Cardiac septum (tissue), 1 donor: ENCODE measurements at regions of chr6 and their contacts with region 1.

Region 1: GRCh38 chr6:151390276-151391032 is 905 bp downstream of the ZBTB2 start:
- DNase-seq: peak; percentile 98

Region 2: DNA sequence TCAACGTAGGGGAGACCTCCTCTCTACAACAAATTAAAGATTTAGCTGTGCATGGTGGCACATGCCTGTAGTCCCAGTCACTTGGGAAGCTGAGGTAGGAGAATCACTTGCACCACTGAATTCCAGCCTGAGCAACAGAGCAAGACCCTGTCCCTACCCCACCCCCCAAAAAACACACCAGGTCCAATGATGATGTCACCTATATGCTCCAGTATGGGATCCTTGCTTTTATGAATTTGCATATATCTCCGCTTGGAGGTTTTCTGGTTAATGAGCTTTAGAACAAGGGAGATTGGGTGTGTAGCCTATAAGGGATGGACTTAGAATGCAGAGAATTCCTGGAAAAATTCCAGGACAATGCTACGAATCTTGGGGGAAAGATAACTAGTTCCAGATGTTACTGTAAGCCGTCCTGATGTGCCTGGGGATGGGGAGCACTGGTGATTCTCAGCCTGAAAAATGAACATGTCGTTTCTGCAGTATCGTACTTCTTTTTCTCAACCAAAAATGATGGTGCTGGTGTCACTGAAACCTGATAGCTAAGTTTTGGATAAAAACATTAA is 60.2 kb before region 1 on chr6:
- intact Hi-C with region 1: no loop called
- DNase-seq: no peak

Region 3: GRCh38 chr6:151374036-151374683 is 16.3 kb before region 1 on chr6:
- intact Hi-C with region 1: loop called (anchors 1 kb)
- DNase-seq: peak; percentile 77

Region 4: GRCh38 chr6:151451950-151452749 is 61.7 kb after region 1 on chr6 and contains the start of gene RMND1:
- intact Hi-C with region 1: loop called (anchors 1 kb)
- DNase-seq: peak; percentile 100
- total RNA-seq, gene RMND1: 11.5 TPM

Region 5: DNA sequence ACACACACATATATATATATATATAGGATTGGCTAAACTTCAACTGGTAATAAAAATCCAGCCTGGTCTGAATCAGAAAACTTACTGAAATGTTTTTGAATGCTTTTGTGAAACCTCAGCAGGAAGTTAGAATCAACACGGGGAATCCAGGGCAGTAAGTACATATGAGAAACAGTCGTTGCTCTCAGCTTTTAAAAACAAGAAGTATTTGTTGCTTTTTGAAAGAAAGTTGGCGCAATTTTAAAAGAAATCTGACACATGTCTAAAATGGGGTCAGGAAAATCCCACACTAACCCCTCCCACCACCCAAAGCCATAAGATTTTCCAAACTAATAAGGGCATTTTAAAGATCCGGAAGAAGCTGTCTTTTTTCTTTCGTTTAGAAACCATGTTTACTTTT is 91.8 kb after region 1 on chr6:
- intact Hi-C with region 1: no loop called
- DNase-seq: no peak